Left cardiac atrium (tissue), 4 donors: ENCODE measurements at regions of chr7 and their contacts with region 1.

Region 1: GRCh38 chr7:37181550-37181932 is 267.1 kb downstream of the ELMO1 start:
- DNase-seq: no peak
- ATAC-seq: peak in 1 of 2 donors; percentile 15

Region 2: DNA sequence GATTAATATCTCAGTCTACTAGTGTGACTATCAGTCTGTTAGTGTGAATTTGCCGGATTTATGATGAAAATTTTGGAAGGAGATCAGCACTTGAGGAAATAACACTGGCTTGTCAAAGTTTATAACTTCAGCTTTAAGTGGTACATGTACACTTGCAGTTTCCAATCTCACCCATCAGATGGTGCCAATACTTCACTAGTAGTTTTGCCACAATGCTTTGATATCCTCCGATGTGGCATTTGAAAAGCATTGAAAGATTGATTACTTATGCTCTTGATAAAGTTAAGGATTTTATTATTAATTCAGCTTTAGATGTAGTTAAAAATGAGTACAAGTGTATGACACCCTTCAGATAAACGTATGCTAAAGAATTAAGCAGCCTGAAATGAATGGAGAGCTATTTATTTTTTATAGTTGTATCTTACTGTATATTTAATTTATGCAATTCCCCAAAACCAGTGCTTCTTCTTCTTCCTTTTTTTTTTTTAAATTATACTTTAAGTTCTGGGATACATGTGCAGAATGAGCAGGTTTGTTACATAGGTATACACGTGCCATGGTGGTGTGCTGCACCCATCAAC is 693.7 kb before region 1 on chr7:
- intact Hi-C with region 1: loop called in 1 of 2 experiments (anchors 5 kb)
- DNase-seq: no peak
- ATAC-seq: peak; percentile 47 to 57

Region 3: GRCh38 chr7:36967387-36967786 is 214.2 kb before region 1 on chr7:
- intact Hi-C with region 1: loop called (anchors 5 kb)
- DNase-seq: peak; percentile 63
- ATAC-seq: peak; percentile 93 to 96

Region 4: DNA sequence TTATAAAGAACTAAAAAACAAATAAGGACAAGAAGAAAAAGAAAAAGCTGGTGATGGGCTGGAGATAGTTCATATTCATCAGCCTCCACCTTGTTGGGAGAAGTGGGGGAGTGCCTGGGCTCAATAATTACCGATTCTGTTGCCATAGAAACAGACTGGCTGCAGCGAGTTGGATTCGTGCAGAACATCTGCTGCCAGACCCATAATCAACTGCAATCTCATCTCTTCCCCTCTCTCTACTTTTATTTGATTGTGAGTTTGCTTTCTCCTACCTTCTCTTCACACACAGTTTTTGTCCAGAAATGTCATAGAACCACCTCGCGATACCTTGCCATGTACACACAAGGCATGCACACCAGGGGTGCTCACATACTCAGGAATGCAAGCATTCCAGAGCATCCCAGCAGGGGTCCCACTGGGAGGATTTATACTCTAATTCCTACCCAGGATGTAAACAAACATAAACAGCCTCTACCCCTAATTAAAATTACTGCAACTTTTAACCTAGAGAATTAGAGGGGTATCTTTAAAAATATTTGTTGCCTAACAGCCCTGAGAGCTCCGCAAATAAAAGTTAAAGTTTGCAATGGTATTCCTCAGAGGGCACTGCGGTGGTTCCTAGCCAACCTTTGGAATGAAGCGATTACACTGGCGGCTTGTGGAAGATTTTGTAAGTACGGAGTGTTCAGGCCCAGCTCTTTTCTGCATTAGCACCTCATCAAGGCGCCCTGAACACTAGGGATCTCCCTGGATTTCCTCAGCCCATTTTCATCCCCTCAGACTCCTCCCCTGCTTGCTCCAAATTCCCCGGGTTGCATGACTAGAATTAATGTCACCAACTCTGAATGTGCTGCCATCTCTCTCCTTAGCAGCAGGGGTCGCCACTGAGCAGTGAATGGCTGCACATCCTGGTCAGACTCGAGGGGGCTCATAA is 194.8 kb before region 1 on chr7:
- intact Hi-C with region 1: loop called in 1 of 2 experiments (anchors 5 kb)
- DNase-seq: peak; percentile 58
- ATAC-seq: peak; percentile 68

Region 5: DNA sequence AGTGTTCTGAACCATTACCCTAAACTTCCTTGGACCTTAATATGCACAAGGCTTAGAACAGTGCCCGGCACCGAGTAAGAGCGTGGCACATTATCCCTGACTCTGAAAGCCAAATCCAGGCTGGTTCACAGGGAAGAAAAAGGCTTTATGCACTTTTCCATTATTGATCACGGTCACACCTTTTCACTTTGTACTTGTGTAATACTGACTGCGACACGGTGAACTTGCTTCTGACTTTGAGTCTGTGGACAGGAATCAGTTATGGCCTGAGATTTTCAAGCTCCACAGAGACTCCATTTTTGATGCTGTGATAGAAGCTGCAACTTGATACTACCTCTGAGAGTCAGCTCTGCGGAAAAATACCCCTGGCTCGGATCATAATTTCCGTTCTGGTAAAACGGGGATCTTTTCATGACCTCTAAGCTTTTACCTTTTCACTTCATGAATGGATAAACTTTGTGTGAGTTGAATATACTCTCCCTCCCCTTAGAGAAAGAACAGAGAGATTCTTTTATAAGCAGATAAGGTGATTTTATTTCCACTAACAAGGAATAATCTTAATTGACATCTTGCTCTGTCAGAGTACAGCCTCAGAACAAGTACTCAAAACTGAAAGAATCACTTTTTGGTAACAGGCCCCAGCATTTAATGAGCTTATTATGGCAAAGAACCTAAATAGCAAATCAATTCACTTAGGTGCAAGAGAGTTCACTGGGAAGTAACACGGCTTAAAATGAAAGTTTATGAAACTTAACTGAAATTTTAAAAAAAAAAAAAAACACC is 178.3 kb after region 1 on chr7:
- intact Hi-C with region 1: no loop called
- DNase-seq: no peak
- ATAC-seq: no peak